CD4-positive, alpha-beta T cell (primary cell): ENCODE measurements at regions of chr3 and their contacts with region 1.

Region 1: DNA sequence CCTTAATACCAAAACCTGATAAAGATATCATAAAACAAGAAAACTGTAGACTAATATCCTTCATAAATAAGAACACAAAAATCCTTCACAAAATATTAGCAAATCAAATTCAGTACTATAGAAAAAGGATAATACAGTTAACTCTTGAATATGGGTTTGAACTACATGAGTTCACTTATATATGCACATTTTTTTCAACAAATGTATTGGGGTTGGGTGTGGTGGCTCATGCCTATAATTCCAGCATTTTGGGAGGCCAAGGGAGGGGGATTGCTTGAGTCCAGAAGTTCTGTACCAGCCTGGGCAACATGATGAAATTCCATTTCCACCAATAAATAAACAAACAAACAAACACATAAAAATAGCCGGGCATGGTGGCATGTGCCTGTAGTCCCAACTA is 39.2 kb downstream of the GOLGB1 start:
- DNase-seq: no peak
- ATAC-seq: no peak
- H3K4me3 ChIP-seq: no peak overlapping the region
- H3K4me3 Mint-ChIP-seq: no peak overlapping the region
- H3K27ac ChIP-seq: no peak overlapping the region
- H3K27ac Mint-ChIP-seq: no peak overlapping the region
- H3K4me1 ChIP-seq: no peaks in the 10 kb centered on the region
- H3K4me1 Mint-ChIP-seq: peaks cover 6% of the 10 kb centered on the region
- H3K27me3 ChIP-seq: no peaks in the 10 kb centered on the region
- H3K27me3 Mint-ChIP-seq: no peaks in the 10 kb centered on the region
- CTCF ChIP-seq: no peak

Region 2: DNA sequence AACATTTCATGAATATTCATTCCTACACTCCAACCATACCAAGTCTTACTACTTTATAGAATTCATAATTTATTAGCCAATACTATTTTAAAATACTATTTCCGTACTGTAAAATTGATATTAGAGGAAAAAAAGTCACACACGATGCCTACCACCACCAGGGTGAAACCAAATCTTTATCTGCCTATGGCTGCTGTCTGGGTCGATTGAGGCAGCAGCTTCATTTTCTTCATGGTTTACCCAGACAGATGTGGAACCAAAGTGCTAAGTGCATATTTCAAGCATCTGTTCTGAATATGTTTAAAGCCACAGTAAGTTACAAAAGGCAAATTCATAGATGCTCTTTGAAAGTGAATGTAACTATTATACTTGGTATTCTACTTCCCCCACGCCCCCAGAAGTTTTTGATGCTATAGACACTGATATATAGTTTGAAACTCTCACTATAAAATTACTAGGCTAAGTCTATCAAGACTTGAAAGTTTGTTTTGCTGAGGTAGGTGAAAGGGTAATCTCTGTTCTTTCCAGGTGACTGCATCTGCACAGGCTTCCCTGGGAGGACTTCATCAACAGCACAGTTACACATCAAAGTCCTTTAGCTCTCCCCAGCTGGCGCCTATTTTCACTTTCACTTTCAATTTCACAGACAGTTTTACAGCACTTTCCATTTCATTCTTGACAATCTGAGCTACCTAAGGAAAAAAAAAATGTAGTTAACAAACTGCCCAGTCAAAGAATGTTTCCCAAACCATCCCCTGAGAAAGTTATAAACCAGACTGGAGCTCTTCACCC is 278.4 kb before region 1 on chr3:
- CTCF ChIA-PET with region 1: no interaction called
- POLR2A ChIA-PET with region 1: no interaction called
- intact Hi-C with region 1: no loop called
- DNase-seq: peak; percentile 0 to 89 (median 28)
- ATAC-seq: peak; percentile 96
- H3K4me3 ChIP-seq: peak overlapping the region; percentile 28
- H3K4me3 Mint-ChIP-seq: peak overlapping the region; percentile 73
- H3K27ac ChIP-seq: no peak overlapping the region
- H3K27ac Mint-ChIP-seq: peak overlapping the region; percentile 82
- H3K4me1 ChIP-seq: peaks cover 4% of the 10 kb centered on the region
- H3K4me1 Mint-ChIP-seq: peaks cover 16% of the 10 kb centered on the region
- H3K27me3 ChIP-seq: no peaks in the 10 kb centered on the region
- H3K27me3 Mint-ChIP-seq: no peaks in the 10 kb centered on the region
- CTCF ChIP-seq: no peak

Region 3: DNA sequence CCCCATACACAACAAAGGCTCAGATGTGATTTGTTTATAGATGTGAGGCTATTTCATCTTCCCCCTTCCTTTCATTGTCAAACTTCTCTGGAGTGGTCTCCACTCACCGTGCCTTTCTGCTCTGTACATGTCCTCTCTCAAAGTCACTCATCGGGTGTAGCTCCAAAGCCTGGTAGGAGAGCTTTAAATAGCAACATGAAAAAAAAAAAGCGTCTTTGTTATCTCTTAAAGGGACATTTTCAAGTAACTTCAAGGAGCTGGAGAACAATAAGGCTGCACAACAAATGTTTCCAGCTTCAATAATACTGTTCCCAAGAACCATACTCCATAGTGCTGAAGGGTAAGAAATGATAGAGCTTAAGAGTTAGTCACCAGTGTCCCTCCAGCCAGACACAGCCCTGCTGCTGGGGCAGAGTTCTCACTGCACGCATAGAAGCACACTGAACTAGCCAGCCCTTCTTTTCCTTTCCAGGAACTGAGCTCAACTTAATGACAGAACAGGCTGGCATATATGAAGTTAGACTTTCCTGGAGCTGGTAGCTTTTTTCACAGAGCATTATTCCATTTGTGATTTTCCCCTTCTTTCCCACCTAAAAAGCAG is 109.0 kb before region 1 on chr3:
- CTCF ChIA-PET with region 1: no interaction called
- POLR2A ChIA-PET with region 1: no interaction called
- intact Hi-C with region 1: no loop called
- DNase-seq: no peak
- ATAC-seq: no peak
- H3K4me3 ChIP-seq: no peak overlapping the region
- H3K4me3 Mint-ChIP-seq: no peak overlapping the region
- H3K27ac ChIP-seq: no peak overlapping the region
- H3K27ac Mint-ChIP-seq: no peak overlapping the region
- H3K4me1 ChIP-seq: no peaks in the 10 kb centered on the region
- H3K4me1 Mint-ChIP-seq: no peaks in the 10 kb centered on the region
- H3K27me3 ChIP-seq: no peaks in the 10 kb centered on the region
- H3K27me3 Mint-ChIP-seq: no peaks in the 10 kb centered on the region
- CTCF ChIP-seq: no peak

Region 4: DNA sequence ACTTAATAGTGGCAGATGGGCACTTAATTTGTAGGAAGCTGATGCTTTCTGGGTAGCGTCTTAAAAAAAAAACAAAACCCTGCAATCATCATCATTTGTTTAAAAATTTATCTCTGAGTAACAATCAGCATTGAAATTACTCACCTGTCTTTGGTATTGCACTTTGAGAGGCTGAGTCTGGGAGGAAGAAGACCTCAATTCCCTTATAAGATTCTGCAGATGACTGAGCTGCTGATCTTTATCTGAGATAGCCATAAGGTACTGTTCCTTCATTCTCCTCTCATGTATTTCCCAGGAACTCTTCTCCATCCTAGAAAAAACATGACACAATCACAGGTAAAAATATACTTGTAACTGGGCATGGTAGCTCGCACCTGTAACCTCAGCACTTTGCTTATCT is 33.2 kb before region 1 on chr3:
- CTCF ChIA-PET with region 1: no interaction called
- POLR2A ChIA-PET with region 1: no interaction called
- intact Hi-C with region 1: loop called in 1 of 2 experiments (anchors 5 kb)
- DNase-seq: no peak
- ATAC-seq: no peak
- H3K4me3 ChIP-seq: no peak overlapping the region
- H3K4me3 Mint-ChIP-seq: no peak overlapping the region
- H3K27ac ChIP-seq: no peak overlapping the region
- H3K27ac Mint-ChIP-seq: no peak overlapping the region
- H3K4me1 ChIP-seq: no peaks in the 10 kb centered on the region
- H3K4me1 Mint-ChIP-seq: no peaks in the 10 kb centered on the region
- H3K27me3 ChIP-seq: no peaks in the 10 kb centered on the region
- H3K27me3 Mint-ChIP-seq: no peaks in the 10 kb centered on the region
- CTCF ChIP-seq: no peak